Transverse colon (tissue), 4 donors: ENCODE measurements at regions of chr14 and their contacts with region 1.

Region 1: DNA sequence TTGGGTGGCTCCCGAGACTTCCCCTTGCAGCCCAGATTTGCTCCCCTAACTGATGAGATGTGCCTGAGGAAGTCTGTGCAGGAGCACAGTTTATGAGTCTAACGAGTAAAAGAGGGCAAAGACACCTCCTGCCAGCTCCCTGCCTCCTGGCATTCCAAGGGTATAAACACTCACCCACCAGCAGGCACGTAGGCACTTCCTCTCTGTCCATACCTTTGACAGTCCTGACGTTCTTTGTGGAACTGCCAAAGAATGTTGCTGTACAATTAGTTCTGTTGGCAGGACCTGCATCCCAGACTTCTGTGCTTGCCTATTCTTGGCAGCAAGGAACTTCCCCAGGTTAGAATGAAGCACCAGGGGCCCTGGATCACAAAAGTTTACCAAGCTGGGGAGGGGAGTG is 889.3 kb downstream of the BCL11B start:
- DNase-seq: no peak
- H3K4me3 ChIP-seq: no peak overlapping the region
- H3K27ac ChIP-seq: no peak overlapping the region
- H3K4me1 ChIP-seq: no peaks in the 10 kb centered on the region
- H3K27me3 ChIP-seq: no peaks in the 10 kb centered on the region
- CTCF ChIP-seq: no peak
- EP300 ChIP-seq: no peak
- POLR2A ChIP-seq: no peak

Region 2: GRCh38 chr14:98350213-98350612 is 32.4 kb before region 1 on chr14:
- in situ Hi-C with region 1: no loop called
- intact Hi-C with region 1: loop called (anchors 1 kb)
- DNase-seq: no peak
- H3K4me3 ChIP-seq: no peak overlapping the region
- H3K27ac ChIP-seq: no peak overlapping the region
- H3K4me1 ChIP-seq: no peaks in the 10 kb centered on the region
- H3K27me3 ChIP-seq: no peaks in the 10 kb centered on the region
- CTCF ChIP-seq: no peak
- EP300 ChIP-seq: no peak
- POLR2A ChIP-seq: no peak